A673 (cell line): ENCODE measurements at regions of chr2 and their contacts with region 1.

Region 1: GRCh38 chr2:112254466-112255239 is at the start of gene ZC3H8:
- DNase-seq: peak; percentile 96
- H3K4me3 ChIP-seq: peak within 1 kb of the TSS; percentile 68
- H3K27ac ChIP-seq: peak within 1 kb of the TSS; percentile 59
- H3K4me1 ChIP-seq: peaks cover 9% of the 10 kb centered on the region
- H3K27me3 ChIP-seq: no peaks in the 10 kb centered on the region
- CTCF ChIP-seq: no peak
- total RNA-seq, gene ZC3H8: 19.7 and 23.2 TPM in 2 replicates

Region 2: DNA sequence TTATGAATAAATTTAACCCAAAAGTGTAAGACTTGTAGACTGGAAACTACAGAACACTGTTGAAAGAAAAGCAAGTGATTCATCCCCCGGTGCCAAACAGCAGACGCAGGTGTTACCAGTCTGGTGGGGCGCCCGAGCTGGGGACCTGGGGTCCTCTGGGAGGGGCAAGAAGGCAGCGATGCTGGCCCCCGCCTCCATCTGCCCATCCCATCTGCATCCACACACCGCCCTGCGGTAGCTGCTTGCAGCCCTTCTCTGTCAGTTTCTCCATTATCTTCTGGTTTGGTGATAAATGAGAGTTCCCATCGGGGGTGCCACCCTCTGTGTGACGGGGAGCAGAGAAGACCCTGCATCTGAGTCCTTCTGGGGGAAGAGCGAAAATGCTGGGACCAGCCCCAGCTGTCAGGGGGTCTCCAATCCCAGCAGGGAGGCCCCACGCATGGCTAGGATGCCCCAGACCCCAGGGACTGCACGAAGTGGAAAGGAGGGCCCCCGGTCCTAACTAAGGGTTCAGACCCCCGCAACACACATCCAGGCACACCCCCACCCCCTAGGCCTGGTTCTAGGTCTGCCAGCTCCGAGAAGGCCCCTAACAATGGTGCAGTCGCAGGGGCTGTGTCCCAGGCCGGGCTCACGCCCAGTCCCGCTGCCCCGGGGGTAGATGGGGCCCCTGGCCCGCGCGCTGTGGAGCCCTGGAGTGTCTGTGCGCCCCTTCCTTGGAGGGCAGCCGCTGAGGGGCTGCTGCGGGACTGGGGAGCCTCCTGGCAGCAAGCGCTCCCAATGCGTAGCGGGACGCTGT is 179.5 kb after region 1 on chr2:
- CTCF ChIA-PET with region 1: interaction called, 3 read pairs
- POLR2A ChIA-PET with region 1: no interaction called
- intact Hi-C with region 1: loop called (anchors 5 kb)
- DNase-seq: no peak
- H3K4me3 ChIP-seq: no peak overlapping the region
- H3K27ac ChIP-seq: no peak overlapping the region
- H3K4me1 ChIP-seq: peaks cover 6% of the 10 kb centered on the region
- H3K27me3 ChIP-seq: no peaks in the 10 kb centered on the region
- CTCF ChIP-seq: no peak